Activated T-helper 1 cell treated with anti-CD3 and anti-CD28 coated beads, Interleukin-12 subunit alpha, Interleukin-12 subunit beta, Interleukin-2, Interleukin-4 antibody, amounts not matched to agents 30 ng/mL and 10 ng/mL and 1 ng/mL, durations not matched to agents 14 hours and 24 hours and 36 hours (primary cell): ENCODE measurements at regions of chr3 and their contacts with region 1.

Region 1: DNA sequence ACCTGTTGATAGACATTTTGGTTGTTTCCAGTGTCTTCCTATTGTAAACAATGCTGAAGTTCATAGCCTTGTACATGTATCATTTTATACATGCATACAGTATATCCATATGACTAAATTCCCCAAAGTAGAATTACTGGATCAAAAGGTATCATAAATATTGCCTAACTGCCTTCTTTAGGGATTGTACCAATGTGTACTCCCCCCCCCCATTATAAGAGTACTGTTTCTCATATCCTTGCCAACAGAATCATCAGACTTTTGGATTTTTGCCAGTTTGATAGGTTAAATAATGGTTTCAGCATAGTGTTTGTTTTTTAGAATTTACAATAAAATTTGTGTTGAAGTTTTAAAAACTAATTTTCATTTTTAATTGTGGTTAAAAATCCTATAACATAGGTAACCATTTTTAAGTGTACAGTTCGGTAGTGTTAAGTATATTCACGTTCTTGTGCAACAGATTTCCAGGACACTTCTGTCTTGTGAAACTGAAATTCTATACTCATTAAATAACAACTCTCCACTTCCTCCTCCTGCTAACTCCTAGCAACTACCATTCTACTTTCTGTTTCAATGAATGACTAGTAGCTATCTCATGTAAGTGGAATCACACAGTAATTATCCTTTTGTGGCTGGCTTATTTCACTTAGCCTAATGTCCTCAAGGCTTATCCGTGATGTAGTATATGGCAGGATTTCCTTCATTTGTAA is 30.8 kb upstream of the MAP3K13 start:
- DNase-seq: no peak
- H3K4me3 Mint-ChIP-seq: no peak overlapping the region
- H3K27ac Mint-ChIP-seq: peak overlapping the region; percentile 63
- H3K4me1 Mint-ChIP-seq: peaks cover 18% of the 10 kb centered on the region
- H3K27me3 Mint-ChIP-seq: no peaks in the 10 kb centered on the region

Region 2: DNA sequence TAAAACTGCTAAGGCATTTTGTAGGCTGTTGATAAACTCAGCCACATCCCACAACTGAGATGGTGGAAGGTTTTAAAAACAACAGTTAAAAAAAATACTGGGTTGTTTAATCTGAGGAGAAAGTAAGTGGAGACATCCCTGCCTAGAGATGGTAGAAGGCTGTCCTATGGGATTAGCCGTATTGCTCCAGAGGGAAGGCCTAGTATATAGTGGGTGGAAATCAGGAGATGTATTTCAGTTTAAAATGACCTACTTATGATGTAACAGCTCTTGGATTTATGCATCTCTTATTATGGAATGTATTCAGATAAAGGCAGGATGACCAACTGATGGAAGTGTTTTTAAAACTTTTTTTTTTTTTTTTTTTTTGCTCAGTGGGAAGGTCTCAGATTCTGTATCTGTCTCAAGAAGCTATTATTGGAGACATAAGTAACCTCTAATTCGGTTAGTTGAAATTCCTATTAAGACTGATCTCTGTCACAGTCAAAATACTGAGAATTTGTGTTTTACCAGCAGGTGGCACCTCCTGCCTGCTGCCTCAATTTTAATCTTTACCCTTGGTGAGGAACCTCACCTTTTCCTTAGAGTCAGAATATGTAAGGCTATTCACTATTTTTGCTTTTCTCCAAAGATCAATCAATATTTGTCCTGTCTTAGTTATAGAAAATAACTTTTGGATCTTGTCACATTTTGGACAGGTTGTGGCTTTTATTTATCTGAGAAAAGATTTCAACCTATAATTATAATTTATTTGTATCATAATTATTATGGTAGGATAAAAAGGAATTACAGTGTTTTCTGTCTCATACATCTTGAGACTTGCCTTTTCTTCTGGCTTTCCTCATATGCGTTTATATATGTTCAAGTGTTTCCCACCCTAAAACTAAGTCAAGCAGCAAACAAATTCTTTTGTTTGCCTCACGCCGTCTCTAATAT is 457.2 kb before region 1 on chr3:
- intact Hi-C with region 1: loop called (anchors 1 kb)
- DNase-seq: no peak
- H3K4me3 Mint-ChIP-seq: no peak overlapping the region
- H3K27ac Mint-ChIP-seq: no peak overlapping the region
- H3K4me1 Mint-ChIP-seq: peaks cover 21% of the 10 kb centered on the region
- H3K27me3 Mint-ChIP-seq: no peaks in the 10 kb centered on the region

Region 3: GRCh38 chr3:185282696-185283394 is 49.3 kb before region 1 on chr3:
- intact Hi-C with region 1: loop called (anchors 2 kb)
- DNase-seq: peak; percentile 91
- H3K4me3 Mint-ChIP-seq: peak overlapping the region; percentile 96
- H3K27ac Mint-ChIP-seq: peak overlapping the region; percentile 80
- H3K4me1 Mint-ChIP-seq: peaks cover 19% of the 10 kb centered on the region
- H3K27me3 Mint-ChIP-seq: peaks cover 3% of the 10 kb centered on the region

Region 4: GRCh38 chr3:185316738-185317407 is 15.3 kb before region 1 on chr3:
- intact Hi-C with region 1: no loop called
- DNase-seq: no peak
- H3K4me3 Mint-ChIP-seq: no peak overlapping the region
- H3K27ac Mint-ChIP-seq: no peak overlapping the region
- H3K4me1 Mint-ChIP-seq: peaks cover 6% of the 10 kb centered on the region
- H3K27me3 Mint-ChIP-seq: peaks cover 12% of the 10 kb centered on the region

Region 5: DNA sequence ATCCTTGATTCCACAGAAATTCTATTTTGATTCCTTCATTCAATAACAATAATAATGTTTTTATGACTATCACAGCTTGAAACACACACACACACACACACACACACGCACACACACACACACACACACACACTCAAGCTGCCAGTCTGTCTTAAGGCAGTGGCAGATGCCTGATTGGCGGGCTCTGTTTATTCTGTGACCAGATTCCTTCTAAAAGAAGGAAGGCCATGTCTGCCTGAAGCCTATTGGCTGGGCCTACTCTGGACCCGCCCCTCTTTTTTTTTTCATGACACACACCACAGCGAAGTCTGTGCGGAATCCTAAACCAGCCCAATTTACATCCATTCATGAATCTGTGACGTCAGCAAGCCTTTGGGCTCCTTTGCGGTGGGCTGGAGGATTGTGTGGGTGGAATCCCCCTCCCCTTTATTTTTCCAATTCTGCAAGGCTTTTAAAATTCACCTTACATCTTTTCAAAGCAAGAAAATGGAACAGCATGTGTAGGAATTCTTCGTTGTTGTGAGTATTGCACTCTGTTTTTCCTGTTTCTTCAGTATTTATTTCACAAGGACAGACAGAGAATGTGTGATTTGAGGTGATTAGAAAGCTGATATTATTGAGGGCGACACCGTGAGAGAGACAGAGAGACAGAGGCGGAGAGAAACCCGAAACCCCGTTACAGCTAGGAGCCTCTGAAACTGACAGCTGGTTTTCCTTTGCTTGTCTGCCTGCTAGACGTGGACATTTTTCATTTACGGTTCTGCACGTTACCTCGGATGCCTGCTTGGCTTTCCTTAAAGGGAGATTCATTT is 30.9 kb after region 1 on chr3 and contains the start of gene MAP3K13:
- intact Hi-C with region 1: loop called (anchors 2 kb)
- DNase-seq: peak; percentile 44
- H3K4me3 Mint-ChIP-seq: peak within 1 kb of the TSS; percentile 85
- H3K27ac Mint-ChIP-seq: no peak within 1 kb of the TSS
- H3K4me1 Mint-ChIP-seq: peaks cover 17% of the 10 kb centered on the region
- H3K27me3 Mint-ChIP-seq: peaks cover 51% of the 10 kb centered on the region
- total RNA-seq, gene MAP3K13: 12.2 and 12.5 TPM in 2 replicates